Posterior vena cava (tissue), 2 donors: ENCODE measurements at regions of chrX and their contacts with region 1.

Region 1: GRCh38 chrX:54439967-54440871 is at the start of gene TSR2:
- DNase-seq: peak; percentile 92
- total RNA-seq, gene TSR2: 38.6 to 39.3 TPM

Region 2: DNA sequence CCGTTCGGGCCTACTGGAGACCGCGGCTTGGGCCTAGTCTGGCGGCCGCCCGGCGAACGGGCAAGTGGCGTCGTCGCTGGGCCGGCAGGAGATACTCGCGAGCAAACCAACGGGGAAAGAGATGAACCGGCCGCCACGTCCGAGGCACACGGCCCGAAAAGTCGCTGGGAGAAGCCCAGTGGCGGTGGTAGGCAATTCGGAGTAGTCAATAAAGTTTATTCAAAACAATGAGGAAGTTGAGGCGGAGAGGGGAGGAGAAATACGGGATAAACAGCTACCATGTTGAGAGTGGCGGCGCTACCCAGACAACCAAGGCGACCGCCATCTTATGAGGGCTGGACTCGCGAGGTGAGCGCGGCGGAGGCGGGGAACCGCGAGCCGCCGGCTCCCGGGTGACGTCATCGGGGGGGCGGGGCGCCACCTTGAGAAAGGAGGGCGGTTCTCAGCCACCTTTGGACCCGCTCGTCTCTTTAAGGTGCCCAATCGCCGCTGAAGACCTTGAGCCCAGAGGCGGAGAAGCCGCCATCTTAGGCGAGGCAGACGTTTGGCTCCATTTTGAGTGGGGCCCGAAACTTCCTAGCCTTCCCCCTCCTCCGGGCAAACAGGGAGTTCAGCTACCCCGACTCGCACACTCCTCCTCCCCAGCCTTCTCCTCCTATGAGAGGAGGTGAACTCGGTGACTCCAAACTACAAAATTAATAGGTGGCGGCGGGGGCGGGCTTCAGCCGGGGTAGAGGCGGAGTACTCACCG is 395.9 kb before region 1 on chrX and contains the start of gene PHF8:
- intact Hi-C with region 1: loop called in 1 of 2 experiments (anchors 10 kb)
- DNase-seq: peak; percentile 97
- total RNA-seq, gene PHF8: 18.9 to 21.3 TPM